OCI-LY7 (cell line): ENCODE measurements at regions of chr16 and their contacts with region 1.

Region 1: DNA sequence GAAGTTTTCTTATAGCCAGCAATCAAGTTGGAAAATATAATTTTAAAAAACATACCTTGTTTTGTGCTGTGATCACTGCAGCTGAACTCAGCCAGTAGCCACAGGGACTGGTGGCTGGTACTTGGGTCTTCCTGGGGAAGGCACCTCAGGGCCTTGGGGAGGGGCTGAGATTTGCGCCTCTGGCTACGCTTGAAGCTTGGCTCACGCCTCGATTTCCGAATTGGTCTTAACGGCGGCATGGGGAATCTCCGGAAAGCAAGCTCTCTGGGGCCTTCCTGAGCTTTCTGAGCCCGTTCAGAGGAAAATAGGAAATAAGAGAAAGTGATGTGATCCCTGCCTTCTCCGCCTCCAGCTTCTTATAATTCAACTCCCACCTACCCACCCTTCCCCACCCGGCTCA is 11.3 kb upstream of the USP7 start:
- DNase-seq: no peak
- H3K4me3 ChIP-seq: no peak overlapping the region
- H3K27ac ChIP-seq: no peak overlapping the region
- H3K4me1 ChIP-seq: no peaks in the 10 kb centered on the region
- CTCF ChIP-seq: no peak

Region 2: GRCh38 chr16:8660841-8661301 is 314.2 kb before region 1 on chr16:
- CTCF ChIA-PET with region 1: interaction called, 15 read pairs
- POLR2A ChIA-PET with region 1: no interaction called
- intact Hi-C with region 1: no loop called
- DNase-seq: peak; percentile 59
- H3K4me3 ChIP-seq: no peak overlapping the region
- H3K27ac ChIP-seq: no peak overlapping the region
- H3K4me1 ChIP-seq: no peaks in the 10 kb centered on the region
- CTCF ChIP-seq: peak; percentile 73

Region 3: DNA sequence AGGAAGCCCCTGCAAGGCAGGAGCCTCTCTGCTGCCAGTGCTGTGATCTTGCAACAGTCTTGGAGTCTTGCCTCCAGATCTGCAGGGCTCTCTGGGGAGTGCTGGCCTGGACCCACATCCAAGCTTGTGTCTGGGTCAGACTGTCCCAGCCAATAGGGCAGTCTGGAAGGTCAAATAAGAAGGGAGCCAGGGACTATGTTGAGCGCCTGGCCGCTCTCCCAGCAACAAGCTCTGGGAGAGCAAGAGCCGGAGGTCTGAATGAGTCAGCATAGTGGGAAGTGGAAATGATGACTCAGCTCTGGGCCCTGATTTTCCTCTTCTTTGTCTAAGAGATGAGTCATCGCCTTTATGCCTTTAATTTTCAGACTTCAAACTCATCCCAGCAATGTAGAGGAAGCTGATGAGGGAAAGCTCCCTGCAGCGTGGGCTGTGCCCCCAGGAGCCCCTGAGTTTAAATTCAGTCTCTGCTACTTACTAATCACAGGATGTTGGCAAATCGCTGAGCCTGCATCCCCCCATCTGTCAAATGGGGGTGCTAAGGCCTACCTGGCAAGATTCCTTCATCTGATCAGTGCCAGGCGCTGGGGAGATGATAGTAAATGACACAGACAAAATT is 72.8 kb after region 1 on chr16:
- CTCF ChIA-PET with region 1: no interaction called
- POLR2A ChIA-PET with region 1: no interaction called
- intact Hi-C with region 1: no loop called
- DNase-seq: no peak
- H3K4me3 ChIP-seq: no peak overlapping the region
- H3K27ac ChIP-seq: no peak overlapping the region
- H3K4me1 ChIP-seq: no peaks in the 10 kb centered on the region
- CTCF ChIP-seq: no peak